ENCODE measurements at regions of chr9 and their contacts with region 1.

Region 1: DNA sequence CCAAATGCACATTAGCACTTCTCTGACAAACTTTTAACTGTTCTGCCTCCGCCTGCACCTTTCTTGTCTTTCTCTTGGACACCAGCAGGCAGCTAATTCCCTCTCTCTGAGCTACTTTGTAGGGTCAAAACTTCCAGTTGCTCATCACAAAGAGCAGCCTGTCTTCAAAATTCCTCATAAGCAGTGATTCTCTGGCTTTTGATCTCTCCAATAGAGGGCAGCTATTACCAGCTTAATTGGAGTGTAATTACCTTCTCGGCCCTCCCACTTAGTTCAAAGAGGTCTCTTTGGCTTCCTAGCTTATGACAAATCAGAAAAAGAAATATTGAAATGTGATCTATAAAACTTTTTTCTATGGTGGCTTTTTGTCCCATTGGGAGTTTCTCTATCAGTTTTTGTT is 43.6 kb upstream of the RAD23B start:
- DNase-seq: no peak
- H3K4me3 ChIP-seq: no peak overlapping the region
- H3K27ac ChIP-seq: no peak overlapping the region
- H3K4me1 ChIP-seq: peaks cover 0 to 21% (median 0%) of the 10 kb centered on the region in 3 donors
- H3K27me3 ChIP-seq: no peaks in the 10 kb centered on the region
- CTCF ChIP-seq: peak in 5 of 6 experiments; percentile 25 to 56 (median 30)
- POLR2A ChIP-seq: no peak

Region 2: GRCh38 chr9:106752581-106752980 is 486.9 kb before region 1 on chr9:
- intact Hi-C with region 1: no loop called
- DNase-seq: no peak
- H3K4me3 ChIP-seq: no peak overlapping the region
- H3K27ac ChIP-seq: no peak overlapping the region
- H3K4me1 ChIP-seq: no peaks in the 10 kb centered on the region
- H3K27me3 ChIP-seq: no peaks in the 10 kb centered on the region
- CTCF ChIP-seq: no peak
- POLR2A ChIP-seq: no peak

Region 3: GRCh38 chr9:107340920-107341632 is 101.6 kb after region 1 on chr9:
- intact Hi-C with region 1: loop called (anchors 10 kb)
- DNase-seq: peak; percentile 10
- H3K4me3 ChIP-seq: peak overlapping the region in 1 of 4 donors; percentile 22
- H3K27ac ChIP-seq: peak overlapping the region; percentile 13 to 59 (median 33)
- H3K4me1 ChIP-seq: peaks cover 7 to 40% (median 18%) of the 10 kb centered on the region in 3 donors
- H3K27me3 ChIP-seq: no peaks in the 10 kb centered on the region
- CTCF ChIP-seq: peak; percentile 74 to 93 (median 90)
- POLR2A ChIP-seq: no peak

Measured in esophagus squamous epithelium (tissue), 5 donors.